ENCODE measurements at regions of chr17 and their contacts with region 1.

Region 1: DNA sequence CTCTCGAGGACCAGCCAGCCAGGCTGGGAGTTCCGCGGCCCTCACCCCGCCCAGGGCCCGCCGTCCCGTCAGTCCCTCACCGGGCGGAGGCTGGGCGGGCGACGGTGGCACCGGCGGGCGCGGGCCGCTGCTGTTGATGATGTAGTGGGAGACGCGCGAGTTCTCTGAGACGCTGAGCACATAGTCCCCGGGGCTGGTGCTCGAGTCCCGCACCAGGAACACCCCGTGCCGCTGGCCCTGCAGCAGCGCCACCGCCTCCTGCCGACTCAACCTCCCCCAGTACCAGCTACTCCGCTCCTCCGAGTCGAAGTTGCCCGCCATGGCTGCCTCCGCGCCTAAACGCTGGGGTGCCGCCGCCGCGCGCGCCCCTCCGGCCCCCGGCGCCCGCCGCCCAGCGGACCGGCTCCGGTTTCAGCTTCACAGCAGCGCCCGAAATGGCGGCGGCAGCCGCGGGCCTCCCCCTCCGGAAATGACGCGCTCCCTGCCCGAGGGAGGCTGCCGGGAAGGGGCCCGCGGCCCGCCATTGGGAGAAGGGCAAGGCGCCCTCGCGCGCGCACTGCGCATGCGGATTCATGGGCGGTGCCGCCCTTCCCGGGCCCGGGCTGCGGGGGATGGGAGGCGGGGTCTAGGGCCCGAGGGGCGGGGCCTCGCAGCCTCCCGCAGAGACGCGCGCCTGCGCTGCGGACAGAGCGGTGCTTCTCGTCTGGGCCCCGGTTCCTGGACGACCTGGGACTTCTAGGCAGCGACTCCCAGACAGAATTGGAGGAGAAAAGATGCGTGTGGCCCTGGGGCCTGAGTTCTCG is at the start of gene CRK:
- DNase-seq: peak; percentile 89
- ATAC-seq: peak; percentile 81
- H3K4me3 ChIP-seq: peak within 1 kb of the TSS; percentile 89 to 99 (median 98)
- H3K27ac ChIP-seq: peak within 1 kb of the TSS; percentile 99
- H3K4me1 ChIP-seq: peaks cover 50% of the 10 kb centered on the region
- H3K27me3 ChIP-seq: no peaks in the 10 kb centered on the region; a peak in 1 of 5 replicates
- CTCF ChIP-seq: no peak; the same call in 1 of the 2 replicates
- EP300 ChIP-seq: no peak
- POLR2A ChIP-seq: peak; percentile 86 to 93
- RAD21 ChIP-seq: peak; percentile 48
- total RNA-seq, gene CRK: 54.2 and 66.2 TPM in 2 replicates

Region 2: GRCh38 chr17:1467898-1468492 is 12.0 kb after region 1 on chr17:
- CTCF ChIA-PET with region 1: no interaction called
- POLR2A ChIA-PET with region 1: interaction called, 17 read pairs
- in situ Hi-C with region 1: no loop called
- intact Hi-C with region 1: loop called (anchors 1 kb)
- DNase-seq: peak; percentile 92
- ATAC-seq: peak; percentile 98
- H3K4me3 ChIP-seq: peak overlapping the region in 1 of 3 experiments; percentile 44; a peak in 1 of 6 replicates
- H3K27ac ChIP-seq: peak overlapping the region; percentile 70
- H3K4me1 ChIP-seq: peaks cover 19% of the 10 kb centered on the region
- H3K27me3 ChIP-seq: no peaks in the 10 kb centered on the region
- CTCF ChIP-seq: peak; percentile 40
- EP300 ChIP-seq: peak; percentile 56 to 64; a peak in 1 of 4 replicates
- POLR2A ChIP-seq: no peak
- RAD21 ChIP-seq: no peak; the same call in 1 of the 2 replicates

Region 3: DNA sequence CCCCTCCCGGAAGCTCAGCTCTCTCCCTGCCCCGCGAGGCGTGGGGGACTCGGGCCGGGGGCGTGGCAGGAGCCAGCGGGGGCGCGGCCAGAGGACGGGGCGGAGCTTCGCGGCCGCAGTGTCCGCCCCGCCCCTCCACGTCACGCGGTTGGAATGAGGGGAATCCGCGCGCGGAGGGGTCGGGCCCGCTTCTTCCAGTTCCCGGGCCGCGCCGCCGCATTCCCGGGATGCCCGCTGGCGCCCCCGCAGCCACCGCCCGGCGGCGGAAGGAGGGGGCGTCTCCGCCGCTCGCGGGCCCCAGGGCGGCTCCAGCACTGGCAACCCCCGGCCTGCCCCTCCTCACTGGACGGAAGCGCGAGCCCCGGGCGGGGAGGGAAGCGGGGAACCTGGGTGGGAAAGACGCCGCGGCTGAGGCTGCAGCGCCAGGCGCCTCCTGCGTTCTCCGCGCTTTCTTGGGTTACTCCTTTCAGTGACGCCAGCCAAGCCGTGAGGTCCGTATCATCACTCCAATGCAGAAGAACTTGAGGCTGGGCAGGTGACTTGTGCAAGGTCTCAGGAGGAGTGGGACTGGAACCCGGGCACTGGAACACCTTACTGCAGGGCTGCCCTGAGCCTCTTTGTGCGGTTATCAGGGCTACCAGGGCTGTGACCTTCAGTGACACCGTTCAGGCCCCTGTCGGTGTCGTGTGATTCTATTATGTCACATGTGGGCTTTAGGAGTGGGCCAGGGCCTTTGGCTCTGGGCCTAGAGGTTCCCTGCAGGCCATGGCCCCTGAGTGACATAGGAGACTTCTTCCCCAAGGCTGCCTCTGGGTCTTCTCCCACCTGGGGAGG is 32.2 kb after region 1 on chr17:
- CTCF ChIA-PET with region 1: no interaction called
- POLR2A ChIA-PET with region 1: interaction called, 21 read pairs
- in situ Hi-C with region 1: no loop called
- intact Hi-C with region 1: loop called (anchors 1 kb)
- DNase-seq: peak; percentile 70
- ATAC-seq: peak; percentile 33
- H3K4me3 ChIP-seq: peak overlapping the region; percentile 47 to 70 (median 70)
- H3K27ac ChIP-seq: peak overlapping the region; percentile 74
- H3K4me1 ChIP-seq: peaks cover 56% of the 10 kb centered on the region
- H3K27me3 ChIP-seq: no peaks in the 10 kb centered on the region; a peak in 1 of 5 replicates
- CTCF ChIP-seq: peak; percentile 19; the same call in 1 of the 2 replicates
- EP300 ChIP-seq: no peak
- POLR2A ChIP-seq: peak; percentile 62 to 69; a peak in 3 of 4 replicates
- RAD21 ChIP-seq: peak; percentile 29; the same call in 1 of the 2 replicates

Region 4: GRCh38 chr17:1498869-1499268 is 42.9 kb after region 1 on chr17:
- CTCF ChIA-PET with region 1: no interaction called
- POLR2A ChIA-PET with region 1: no interaction called
- in situ Hi-C with region 1: no loop called
- intact Hi-C with region 1: no loop called
- DNase-seq: no peak
- ATAC-seq: no peak
- H3K4me3 ChIP-seq: no peak overlapping the region
- H3K27ac ChIP-seq: no peak overlapping the region
- H3K4me1 ChIP-seq: no peaks in the 10 kb centered on the region
- H3K27me3 ChIP-seq: no peaks in the 10 kb centered on the region; a peak in 1 of 5 replicates
- CTCF ChIP-seq: no peak
- EP300 ChIP-seq: no peak
- POLR2A ChIP-seq: no peak
- RAD21 ChIP-seq: no peak

Measured in HepG2 (cell line).